H1 (cell line): ENCODE measurements at regions of chr17 and their contacts with region 1.

Region 1: DNA sequence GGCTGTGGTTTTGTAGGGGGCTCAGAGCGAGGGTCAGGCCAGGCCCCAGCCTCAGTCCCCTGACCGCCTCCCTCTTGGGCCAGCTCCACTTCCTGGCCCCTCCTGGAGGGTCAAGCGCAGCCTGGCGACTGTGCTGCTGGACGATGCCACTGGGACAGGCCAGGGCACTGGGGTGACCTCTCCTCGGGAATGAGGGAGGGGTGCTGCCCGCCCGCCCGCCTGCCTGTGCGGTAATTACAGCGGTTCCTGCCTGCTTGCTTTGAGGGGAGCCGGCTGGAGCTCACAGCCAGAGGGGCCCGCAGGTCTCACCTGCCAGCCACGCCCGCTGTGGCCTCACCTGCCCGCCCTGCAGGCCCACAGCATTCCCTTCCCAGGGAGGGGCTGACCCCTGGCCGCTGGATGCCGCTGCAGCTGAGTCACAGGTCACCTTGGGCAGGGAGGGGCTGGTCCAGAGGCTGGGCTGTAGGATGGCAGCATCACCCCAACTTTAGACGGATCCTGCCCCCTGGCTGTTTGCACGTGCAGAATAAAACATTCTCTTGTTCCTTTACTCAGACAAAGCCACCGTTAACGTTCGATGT is 76.7 kb upstream of the CBX4 start:
- DNase-seq: peak; percentile 64 to 74
- H3K4me3 ChIP-seq: no peak overlapping the region
- H3K27ac ChIP-seq: no peak overlapping the region
- H3K4me1 ChIP-seq: peaks cover 0 to 8% (median 4%) of the 10 kb centered on the region in 4 experiments; a peak in 5 of 7 replicates
- H3K27me3 ChIP-seq: no peaks in the 10 kb centered on the region; a peak in 2 of 7 replicates
- CTCF ChIP-seq: peak; percentile 52 to 69 (median 68)
- EP300 ChIP-seq: no peak
- POLR2A ChIP-seq: no peak
- RAD21 ChIP-seq: peak; percentile 79 to 82

Region 2: GRCh38 chr17:79747508-79748295 is 168.2 kb before region 1 on chr17:
- CTCF ChIA-PET with region 1: interaction called, 11 read pairs
- POLR2A ChIA-PET with region 1: no interaction called
- DNase-seq: no peak
- H3K4me3 ChIP-seq: peak overlapping the region; percentile 17 to 62 (median 36)
- H3K27ac ChIP-seq: no peak overlapping the region
- H3K4me1 ChIP-seq: peaks cover 4 to 24% (median 15%) of the 10 kb centered on the region in 4 experiments
- H3K27me3 ChIP-seq: peaks cover 19 to 47% (median 35%) of the 10 kb centered on the region in 4 experiments
- CTCF ChIP-seq: no peak
- EP300 ChIP-seq: no peak
- POLR2A ChIP-seq: no peak
- RAD21 ChIP-seq: no peak

Region 3: DNA sequence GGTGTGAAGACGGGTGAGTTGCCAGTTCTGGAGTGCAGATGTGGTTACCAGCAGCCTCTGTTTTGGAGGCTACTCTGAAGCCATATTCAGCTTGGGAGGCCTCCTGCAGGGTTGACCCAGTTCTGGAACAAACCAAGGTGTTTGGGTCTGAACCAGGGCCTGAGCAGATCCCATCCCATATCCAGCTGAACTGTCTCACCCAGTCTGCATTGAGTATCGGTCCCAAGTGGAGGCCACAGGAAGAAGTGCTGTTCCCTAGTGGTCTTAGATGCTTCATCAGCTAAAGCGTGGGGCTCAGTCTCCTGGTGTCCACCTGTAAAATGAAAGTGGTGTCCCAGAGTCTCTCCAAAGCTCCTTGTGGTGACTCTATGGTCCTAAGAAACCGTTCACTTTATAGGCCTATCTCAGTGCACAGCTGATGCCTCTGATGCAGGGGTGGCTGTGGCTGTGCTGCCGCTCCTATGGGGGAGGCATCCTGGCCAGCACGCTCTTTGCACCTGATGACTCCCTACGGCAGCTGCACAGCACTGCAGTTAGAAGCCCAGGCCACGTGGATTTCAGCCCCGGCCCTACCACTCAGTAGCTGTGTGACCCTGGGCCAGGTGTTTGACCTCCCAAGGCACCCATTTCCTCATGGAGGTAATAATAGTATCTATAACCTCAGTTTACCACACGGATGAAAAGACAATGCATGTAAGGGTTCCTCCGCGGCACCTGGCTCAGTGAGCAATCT is 97.7 kb before region 1 on chr17:
- CTCF ChIA-PET with region 1: interaction called, 12 read pairs
- POLR2A ChIA-PET with region 1: interaction called, 3 read pairs
- DNase-seq: no peak
- H3K4me3 ChIP-seq: no peak overlapping the region
- H3K27ac ChIP-seq: no peak overlapping the region
- H3K4me1 ChIP-seq: peaks cover 0 to 17% (median 10%) of the 10 kb centered on the region in 4 experiments; a peak in 6 of 7 replicates
- H3K27me3 ChIP-seq: peaks cover 60 to 90% (median 79%) of the 10 kb centered on the region in 4 experiments
- CTCF ChIP-seq: no peak
- EP300 ChIP-seq: no peak
- POLR2A ChIP-seq: no peak
- RAD21 ChIP-seq: no peak

Region 4: GRCh38 chr17:79866791-79867518 is 49.0 kb before region 1 on chr17:
- CTCF ChIA-PET with region 1: interaction called, 10 read pairs
- POLR2A ChIA-PET with region 1: interaction called, 3 read pairs
- DNase-seq: no peak
- H3K4me3 ChIP-seq: no peak overlapping the region
- H3K27ac ChIP-seq: no peak overlapping the region
- H3K4me1 ChIP-seq: peaks cover 0 to 11% (median 4%) of the 10 kb centered on the region in 4 experiments; a peak in 6 of 7 replicates
- H3K27me3 ChIP-seq: no peaks in the 10 kb centered on the region; a peak in 2 of 7 replicates
- CTCF ChIP-seq: no peak
- EP300 ChIP-seq: no peak
- POLR2A ChIP-seq: no peak
- RAD21 ChIP-seq: no peak

Region 5: DNA sequence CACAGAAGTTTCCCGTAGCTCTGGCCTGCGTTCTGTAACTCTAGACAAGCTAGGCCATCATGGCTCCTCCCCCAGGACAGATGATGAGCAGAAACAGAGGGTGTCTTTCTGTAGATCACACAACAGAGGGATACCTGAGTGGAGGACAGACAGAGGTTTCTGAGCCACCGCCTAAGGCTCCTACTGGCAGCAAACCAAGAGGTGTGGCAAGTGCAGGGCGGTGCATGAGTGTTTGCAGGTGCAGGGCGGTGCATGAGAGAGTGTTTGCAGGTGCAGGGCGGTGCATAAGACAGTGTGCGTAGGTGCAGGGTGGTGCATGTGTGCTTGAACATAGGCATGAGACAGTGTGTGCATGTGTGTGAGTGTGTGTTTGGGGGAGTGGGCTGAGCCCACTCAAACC is 23.5 kb before region 1 on chr17:
- CTCF ChIA-PET with region 1: interaction called, 36 read pairs
- POLR2A ChIA-PET with region 1: no interaction called
- DNase-seq: no peak
- H3K4me3 ChIP-seq: no peak overlapping the region
- H3K27ac ChIP-seq: no peak overlapping the region
- H3K4me1 ChIP-seq: no peaks in the 10 kb centered on the region
- H3K27me3 ChIP-seq: peaks cover 0 to 3% (median 0%) of the 10 kb centered on the region in 4 experiments; a peak in 1 of 7 replicates
- CTCF ChIP-seq: no peak
- EP300 ChIP-seq: no peak
- POLR2A ChIP-seq: no peak
- RAD21 ChIP-seq: no peak

Region 6: GRCh38 chr17:79905832-79906231 is 10.1 kb before region 1 on chr17:
- CTCF ChIA-PET with region 1: interaction called, 17 read pairs
- POLR2A ChIA-PET with region 1: no interaction called
- DNase-seq: no peak
- H3K4me3 ChIP-seq: no peak overlapping the region
- H3K27ac ChIP-seq: no peak overlapping the region
- H3K4me1 ChIP-seq: peaks cover 0 to 8% (median 0%) of the 10 kb centered on the region in 4 experiments; a peak in 2 of 7 replicates
- H3K27me3 ChIP-seq: no peaks in the 10 kb centered on the region; a peak in 2 of 7 replicates
- CTCF ChIP-seq: peak; percentile 20 to 50 (median 40); a peak in 3 of 4 replicates
- EP300 ChIP-seq: no peak
- POLR2A ChIP-seq: no peak
- RAD21 ChIP-seq: peak in 1 of 2 experiments; percentile 16; a peak in 1 of 4 replicates